Left colon (tissue), 2 donors: ENCODE measurements at regions of chr20 and their contacts with region 1.

Region 1: DNA sequence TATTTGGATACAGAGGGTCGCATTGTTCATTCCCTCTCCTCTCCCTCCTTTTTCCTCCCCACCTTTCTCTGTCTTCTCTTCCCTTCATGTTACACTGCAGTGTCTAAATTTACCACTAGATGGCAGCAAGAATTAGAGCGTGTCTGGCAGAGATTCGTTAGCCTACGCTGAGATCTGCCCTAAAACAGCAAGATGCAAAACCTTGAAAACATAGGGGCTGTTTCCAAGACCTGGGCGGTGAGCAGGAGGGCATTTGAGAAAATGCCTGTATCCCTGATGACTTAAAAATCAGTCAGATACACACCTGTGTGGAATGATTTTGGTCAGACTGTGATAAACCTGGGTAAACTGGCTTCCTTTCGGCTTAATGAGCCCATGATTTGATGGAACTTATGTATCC is 101.5 kb upstream of the ISM1 start:
- DNase-seq: peak in 1 of 2 donors; percentile 9
- ATAC-seq: peak; percentile 76

Region 2: GRCh38 chr20:13261460-13262301 is 142.1 kb after region 1 on chr20:
- intact Hi-C with region 1: loop called in 1 of 2 experiments (anchors 10 kb)
- DNase-seq: peak in 1 of 2 donors; percentile 59
- ATAC-seq: peak; percentile 78

Region 3: GRCh38 chr20:13274275-13274861 is 154.8 kb after region 1 on chr20:
- intact Hi-C with region 1: loop called (anchors 10 kb)
- DNase-seq: no peak
- ATAC-seq: no peak

Region 4: DNA sequence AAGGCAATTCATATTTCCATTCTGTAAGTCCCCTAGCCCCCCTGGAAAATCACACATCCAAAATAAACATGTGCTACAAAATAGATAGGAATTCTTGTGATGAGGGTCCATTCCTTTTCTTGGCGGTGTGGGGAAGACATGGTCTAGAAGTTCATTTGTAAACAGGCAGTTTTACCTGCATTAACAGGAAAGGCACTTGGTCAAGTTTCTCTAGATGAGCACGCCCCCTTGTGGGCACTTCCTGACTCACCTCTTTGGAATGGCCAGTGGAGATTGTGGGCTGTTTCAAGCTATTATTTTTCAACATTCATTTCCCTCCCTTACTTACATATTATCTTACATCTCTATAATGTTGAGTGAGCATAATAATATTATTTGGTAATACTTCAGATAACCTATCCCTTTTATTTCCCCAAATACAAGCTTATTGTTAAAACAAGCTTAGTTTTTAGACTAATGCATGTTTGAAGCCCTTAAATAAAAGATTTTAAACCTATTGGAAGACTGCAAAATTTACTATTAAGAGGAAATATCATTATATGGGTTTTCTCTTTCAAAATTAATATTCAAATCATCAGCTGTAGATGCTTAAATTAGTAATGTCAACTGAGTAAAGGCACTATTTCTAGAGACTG is 427.0 kb after region 1 on chr20:
- intact Hi-C with region 1: loop called in 1 of 2 experiments (anchors 5 kb)
- DNase-seq: peak; percentile 61 to 91
- ATAC-seq: peak; percentile 83

Region 5: GRCh38 chr20:13771853-13772453 is 652.4 kb after region 1 on chr20:
- intact Hi-C with region 1: loop called in 1 of 2 experiments (anchors 5 kb)
- DNase-seq: no peak
- ATAC-seq: no peak